Calu3 (cell line): ENCODE measurements at regions of chr10 and their contacts with region 1.

Region 1: GRCh38 chr10:98309366-98310355 is 41.7 kb upstream of the LOXL4 start:
- DNase-seq: peak; percentile 78
- H3K4me3 Mint-ChIP-seq: peak overlapping the region; percentile 13
- H3K27ac Mint-ChIP-seq: no peak overlapping the region
- H3K4me1 Mint-ChIP-seq: peaks cover 23% of the 10 kb centered on the region
- H3K27me3 Mint-ChIP-seq: no peaks in the 10 kb centered on the region
- CTCF ChIP-seq: peak; percentile 55

Region 2: DNA sequence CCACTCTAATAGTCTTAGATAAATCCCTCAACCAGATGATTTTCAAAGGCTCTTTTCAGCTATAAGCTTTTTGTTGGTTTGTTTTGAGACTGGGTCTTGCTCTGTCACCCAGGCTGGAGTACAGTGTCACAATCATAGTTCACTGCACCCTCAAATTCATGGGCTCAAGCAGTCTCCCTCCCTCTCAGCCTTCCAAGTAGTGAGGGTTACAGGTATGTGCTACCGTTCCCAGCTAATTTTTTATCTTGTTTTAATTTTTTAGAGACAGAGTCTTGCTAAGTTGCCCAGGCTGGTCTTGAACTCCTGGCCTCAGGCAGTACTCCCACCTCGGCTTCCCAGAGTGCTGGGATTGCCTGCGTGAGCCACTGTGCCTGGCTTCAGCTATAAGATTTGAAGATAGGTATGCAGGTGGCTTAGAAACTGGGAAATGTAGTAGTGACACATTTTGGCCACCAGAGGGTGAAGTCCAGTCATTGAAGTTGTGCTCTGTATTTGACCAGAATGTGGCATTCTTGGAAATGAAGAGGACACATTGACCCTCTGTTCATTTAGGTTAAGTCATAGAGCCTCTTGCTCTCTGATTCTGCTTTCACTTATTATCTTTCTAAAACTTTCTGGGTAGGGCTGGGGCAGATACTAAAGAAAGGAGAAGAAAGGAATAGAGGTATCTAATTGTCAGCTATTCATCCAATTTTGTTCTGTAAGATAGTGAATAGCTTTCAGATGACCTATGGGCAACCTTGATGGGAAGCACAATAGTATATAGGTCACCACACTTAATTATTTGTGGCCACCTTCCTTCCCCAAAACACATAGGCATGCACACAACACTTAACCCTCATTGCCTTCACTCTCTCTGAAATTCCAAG is 139.2 kb before region 1 on chr10:
- CTCF ChIA-PET with region 1: interaction called, 8 read pairs
- intact Hi-C with region 1: loop called (anchors 5 kb)
- DNase-seq: peak; percentile 40
- H3K4me3 Mint-ChIP-seq: no peak overlapping the region
- H3K27ac Mint-ChIP-seq: no peak overlapping the region
- H3K4me1 Mint-ChIP-seq: no peaks in the 10 kb centered on the region
- H3K27me3 Mint-ChIP-seq: no peaks in the 10 kb centered on the region
- CTCF ChIP-seq: peak; percentile 47

Region 3: GRCh38 chr10:98242823-98243222 is 66.8 kb before region 1 on chr10:
- CTCF ChIA-PET with region 1: interaction called, 12 read pairs
- intact Hi-C with region 1: loop called (anchors 1 kb)
- DNase-seq: no peak
- H3K4me3 Mint-ChIP-seq: no peak overlapping the region
- H3K27ac Mint-ChIP-seq: no peak overlapping the region
- H3K4me1 Mint-ChIP-seq: no peaks in the 10 kb centered on the region
- H3K27me3 Mint-ChIP-seq: no peaks in the 10 kb centered on the region
- CTCF ChIP-seq: no peak

Region 4: GRCh38 chr10:98262571-98262970 is 47.1 kb before region 1 on chr10:
- CTCF ChIA-PET with region 1: interaction called, 22 read pairs
- intact Hi-C with region 1: loop called (anchors 1 kb)
- DNase-seq: peak; percentile 50
- H3K4me3 Mint-ChIP-seq: no peak overlapping the region
- H3K27ac Mint-ChIP-seq: no peak overlapping the region
- H3K4me1 Mint-ChIP-seq: peaks cover 25% of the 10 kb centered on the region
- H3K27me3 Mint-ChIP-seq: no peaks in the 10 kb centered on the region
- CTCF ChIP-seq: peak; percentile 49